ENCODE measurements at regions of chr16 and their contacts with region 1.

Region 1: GRCh38 chr16:527006-527753 is at the start of gene CAPN15:
- DNase-seq: peak; percentile 96
- total RNA-seq, gene CAPN15: 23.3 to 26.6 TPM

Region 2: DNA sequence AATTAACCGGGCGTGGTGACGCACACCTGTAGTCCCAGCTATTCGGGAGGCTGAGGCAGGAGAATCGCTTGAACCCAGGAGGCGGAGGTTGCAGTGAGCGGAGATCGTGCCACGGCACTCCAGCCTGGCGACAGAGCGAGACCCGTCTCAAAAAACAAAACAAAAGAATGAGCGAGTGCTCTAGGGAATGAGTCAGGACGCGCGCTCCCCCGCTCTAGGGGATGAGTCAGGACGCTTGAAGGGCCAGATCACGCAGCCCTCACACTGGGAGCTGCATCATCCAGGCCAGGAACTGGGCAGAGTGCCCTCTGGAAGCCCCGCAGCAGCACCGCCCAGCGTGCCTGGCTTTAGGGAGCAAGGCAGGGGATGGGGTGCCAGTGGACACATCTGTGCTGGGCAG is 99.6 kb after region 1 on chr16:
- intact Hi-C with region 1: no loop called
- DNase-seq: peak; percentile 91

Region 3: DNA sequence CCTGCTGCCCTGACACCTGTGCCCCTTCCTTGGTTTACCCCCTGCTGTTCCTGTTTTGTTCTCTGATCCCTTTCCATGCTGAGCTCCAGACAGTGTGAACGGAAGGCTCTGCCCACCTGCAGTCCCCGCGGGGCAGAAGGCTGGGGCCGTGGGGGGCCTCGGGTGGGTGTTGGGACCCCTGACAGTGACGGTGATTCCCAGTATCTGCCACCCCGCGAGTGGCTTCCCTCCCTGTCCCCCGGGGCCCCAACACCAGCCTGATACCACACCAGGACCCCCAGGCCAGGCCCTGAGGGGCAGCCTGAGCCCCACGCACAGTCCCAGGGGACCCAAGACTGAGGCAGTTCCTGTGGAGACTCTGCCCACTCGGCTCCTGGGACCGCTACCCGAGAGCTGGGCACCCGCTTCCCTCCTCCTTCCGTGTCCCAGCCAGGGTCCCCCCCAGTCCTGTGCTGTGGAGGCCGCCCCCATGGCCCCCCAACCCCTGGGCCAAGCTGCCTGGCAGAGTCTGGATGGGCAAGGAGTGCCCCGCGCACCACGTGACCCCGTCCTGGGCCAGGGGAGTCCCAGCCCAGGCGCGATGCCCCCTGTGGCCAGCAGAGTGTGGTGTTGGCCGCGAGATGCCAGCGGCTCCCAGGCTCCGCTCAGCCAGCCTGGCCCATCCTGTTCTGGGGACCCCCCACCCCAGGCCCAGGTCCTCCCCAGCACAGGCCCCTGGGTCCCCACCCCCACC is 578.9 kb after region 1 on chr16:
- intact Hi-C with region 1: no loop called
- DNase-seq: no peak

Region 4: GRCh38 chr16:2422123-2422867 is 1895.1 kb after region 1 on chr16:
- intact Hi-C with region 1: loop called in 1 of 2 experiments (anchors 5 kb)
- DNase-seq: no peak

Measured in posterior vena cava (tissue), 2 donors.